ENCODE measurements at regions of chr6 and their contacts with region 1.

Region 1: DNA sequence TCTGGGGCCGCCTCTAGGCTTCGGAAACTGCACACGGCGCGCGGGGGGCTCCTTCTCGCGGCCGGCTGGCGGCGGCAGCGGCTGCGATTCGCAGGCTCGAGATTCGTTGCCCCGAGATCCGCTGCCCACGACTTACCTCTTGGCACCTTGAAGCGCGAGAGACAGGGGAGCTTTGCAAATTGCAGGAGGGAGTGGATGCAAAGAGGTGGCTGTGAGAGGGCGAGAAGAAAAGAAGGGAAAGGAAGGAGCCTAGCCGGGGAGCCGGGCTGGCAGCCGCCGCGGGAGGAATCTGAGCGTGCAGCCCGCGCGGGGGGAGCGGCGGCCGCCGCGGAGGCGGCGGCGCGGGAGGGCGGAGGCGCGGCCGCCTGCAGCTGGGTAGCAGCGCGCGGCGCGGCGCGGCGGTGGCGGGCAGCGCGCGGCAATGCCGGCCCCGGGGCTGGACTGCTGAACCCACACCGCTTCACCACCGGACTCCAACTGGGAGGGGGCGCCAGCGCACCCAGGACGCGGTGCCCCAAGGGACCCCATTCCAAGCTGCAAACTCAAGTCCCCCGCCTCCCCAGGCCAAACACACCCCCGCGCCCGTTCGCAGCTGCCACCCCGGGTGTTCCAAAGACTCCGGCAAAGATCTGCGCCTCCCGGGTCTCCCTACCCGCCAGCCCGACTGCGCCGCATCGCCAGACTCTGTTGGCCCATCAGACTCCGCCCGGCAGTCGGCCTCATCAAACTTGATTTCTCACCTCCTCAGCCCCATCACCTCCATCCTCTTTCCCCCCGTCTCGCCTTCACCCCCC is 44.2 kb upstream of the SUPT3H start:
- H3K4me3 Mint-ChIP-seq: peak overlapping the region; percentile 99
- H3K27ac Mint-ChIP-seq: peak overlapping the region; percentile 96
- H3K4me1 Mint-ChIP-seq: peaks cover 43% of the 10 kb centered on the region
- H3K27me3 Mint-ChIP-seq: peaks cover 14% of the 10 kb centered on the region

Region 2: DNA sequence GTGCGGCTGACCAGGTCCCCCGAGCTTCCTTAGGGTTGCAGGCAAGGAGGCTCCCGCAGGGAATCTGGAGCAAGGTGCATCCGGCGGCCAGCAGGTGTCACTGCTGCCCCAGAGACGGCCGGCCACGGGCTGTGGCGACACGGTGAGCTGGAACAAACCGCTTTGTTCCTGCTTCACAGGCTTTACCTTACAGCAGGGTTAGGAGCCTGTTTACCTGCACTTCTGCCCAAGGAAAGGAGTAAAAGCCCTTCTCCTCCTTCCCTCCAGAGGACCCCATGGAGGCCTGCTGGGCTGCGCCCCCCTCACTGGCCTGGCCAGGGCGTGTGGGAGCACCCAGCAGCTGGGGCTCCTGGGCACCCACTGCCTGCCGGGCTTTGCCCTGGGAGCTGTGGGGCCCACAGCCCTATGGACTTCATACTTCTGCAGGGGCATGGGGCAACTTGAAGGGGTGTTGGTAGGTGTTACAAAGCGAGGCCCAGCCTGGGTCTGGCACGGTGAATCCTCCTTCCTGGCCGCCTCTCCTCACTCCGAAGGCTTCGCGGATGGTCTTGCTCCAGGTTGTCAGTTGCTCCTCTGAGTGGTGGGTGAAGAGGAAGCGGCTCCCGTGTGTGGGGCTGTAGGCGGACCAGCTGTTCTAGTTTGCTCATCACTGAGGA is 946.0 kb before region 1 on chr6:
- intact Hi-C with region 1: loop called (anchors 5 kb)
- H3K4me3 Mint-ChIP-seq: no peak overlapping the region
- H3K27ac Mint-ChIP-seq: no peak overlapping the region
- H3K4me1 Mint-ChIP-seq: peaks cover 26% of the 10 kb centered on the region
- H3K27me3 Mint-ChIP-seq: peaks cover 18% of the 10 kb centered on the region

Region 3: DNA sequence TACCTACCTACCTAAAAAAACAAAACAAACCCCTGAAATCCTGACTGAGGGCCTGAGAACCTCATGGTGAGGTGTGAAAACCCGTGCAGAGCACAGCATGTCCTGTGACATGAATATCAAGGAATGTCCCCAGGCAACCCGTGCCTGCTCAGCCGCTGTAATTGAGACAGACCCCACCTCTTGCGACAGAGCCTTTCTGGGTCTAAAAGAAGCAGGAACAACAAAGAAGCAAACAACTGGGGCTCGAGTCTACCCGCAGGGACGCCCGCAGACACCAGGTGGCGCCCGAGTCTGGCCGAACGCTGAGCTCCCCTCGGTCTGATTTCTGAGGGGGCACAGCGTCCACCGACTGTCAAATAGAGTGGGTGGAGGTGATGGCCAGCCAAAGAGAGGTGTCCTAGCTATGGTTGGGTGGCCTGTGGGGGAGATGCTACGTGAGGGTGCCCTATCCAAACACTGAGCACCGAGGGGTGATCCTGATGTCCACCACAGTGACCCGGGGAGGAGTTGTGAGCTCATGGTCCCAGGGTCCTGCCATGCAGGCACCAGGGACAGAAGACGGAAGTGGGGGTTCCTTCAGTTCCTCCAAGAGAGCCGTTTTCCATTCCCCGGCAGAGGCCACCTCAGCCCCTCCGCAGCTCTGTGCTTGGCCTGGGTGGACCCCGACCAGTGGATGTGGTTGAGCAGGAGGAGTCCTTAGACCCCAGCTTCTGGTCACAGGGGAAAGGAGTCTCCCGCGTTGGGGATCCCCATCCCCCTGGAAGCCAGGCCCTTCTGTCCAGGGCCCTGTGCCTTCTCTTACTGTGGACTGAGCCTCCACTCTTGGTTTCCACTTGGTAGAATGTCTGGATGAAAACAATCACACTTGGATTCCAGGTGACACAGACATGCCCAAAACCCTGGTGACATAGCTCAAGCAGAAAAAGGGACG is 766.2 kb before region 1 on chr6:
- intact Hi-C with region 1: loop called (anchors 2 kb)
- H3K4me3 Mint-ChIP-seq: no peak overlapping the region
- H3K27ac Mint-ChIP-seq: peak overlapping the region; percentile 37
- H3K4me1 Mint-ChIP-seq: peaks cover 30% of the 10 kb centered on the region
- H3K27me3 Mint-ChIP-seq: peaks cover 20% of the 10 kb centered on the region

Region 4: DNA sequence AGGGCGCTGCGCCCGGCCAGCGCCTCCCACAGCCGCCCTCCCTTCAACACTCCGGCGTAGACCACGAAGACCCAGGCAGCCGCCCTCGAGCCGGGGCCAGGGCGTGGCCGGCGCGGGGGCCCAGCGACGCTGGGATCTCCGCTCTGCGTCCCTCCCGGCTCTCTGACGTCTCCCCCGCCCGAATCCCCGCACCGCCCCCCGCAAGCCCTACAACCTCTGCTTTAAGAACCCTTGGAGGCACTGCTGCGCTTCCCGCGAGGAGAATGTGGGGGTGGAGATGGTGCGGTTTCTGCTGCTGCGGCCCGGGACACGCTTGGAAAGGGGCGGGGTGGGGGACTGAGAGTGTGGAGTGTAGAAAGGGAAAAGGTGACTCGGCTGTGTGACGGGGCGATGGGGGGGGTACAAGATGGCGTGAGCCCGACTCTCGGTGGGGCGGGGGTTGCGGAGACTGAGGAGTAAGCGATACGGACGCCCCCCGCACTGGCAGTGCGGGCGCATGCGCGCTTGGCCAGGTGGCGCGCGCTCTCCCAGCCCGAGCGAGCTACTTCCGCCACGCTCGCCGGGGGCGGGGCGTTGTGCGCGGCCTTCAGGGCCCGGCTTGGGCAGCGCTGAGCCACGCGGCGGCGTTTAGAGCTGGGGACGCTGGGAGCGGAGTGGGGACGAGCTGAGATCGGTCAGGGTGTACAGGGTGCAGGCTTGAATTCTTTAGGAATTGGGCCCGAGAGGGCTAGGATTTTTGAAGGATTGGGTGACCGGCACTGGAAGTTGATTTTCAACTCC is 44.2 kb before region 1 on chr6 and contains the start of gene SUPT3H:
- intact Hi-C with region 1: loop called (anchors 5 kb)
- H3K4me3 Mint-ChIP-seq: peak within 1 kb of the TSS; percentile 95
- H3K27ac Mint-ChIP-seq: peak within 1 kb of the TSS; percentile 99
- H3K4me1 Mint-ChIP-seq: peaks cover 23% of the 10 kb centered on the region
- H3K27me3 Mint-ChIP-seq: no peaks in the 10 kb centered on the region

Region 5: DNA sequence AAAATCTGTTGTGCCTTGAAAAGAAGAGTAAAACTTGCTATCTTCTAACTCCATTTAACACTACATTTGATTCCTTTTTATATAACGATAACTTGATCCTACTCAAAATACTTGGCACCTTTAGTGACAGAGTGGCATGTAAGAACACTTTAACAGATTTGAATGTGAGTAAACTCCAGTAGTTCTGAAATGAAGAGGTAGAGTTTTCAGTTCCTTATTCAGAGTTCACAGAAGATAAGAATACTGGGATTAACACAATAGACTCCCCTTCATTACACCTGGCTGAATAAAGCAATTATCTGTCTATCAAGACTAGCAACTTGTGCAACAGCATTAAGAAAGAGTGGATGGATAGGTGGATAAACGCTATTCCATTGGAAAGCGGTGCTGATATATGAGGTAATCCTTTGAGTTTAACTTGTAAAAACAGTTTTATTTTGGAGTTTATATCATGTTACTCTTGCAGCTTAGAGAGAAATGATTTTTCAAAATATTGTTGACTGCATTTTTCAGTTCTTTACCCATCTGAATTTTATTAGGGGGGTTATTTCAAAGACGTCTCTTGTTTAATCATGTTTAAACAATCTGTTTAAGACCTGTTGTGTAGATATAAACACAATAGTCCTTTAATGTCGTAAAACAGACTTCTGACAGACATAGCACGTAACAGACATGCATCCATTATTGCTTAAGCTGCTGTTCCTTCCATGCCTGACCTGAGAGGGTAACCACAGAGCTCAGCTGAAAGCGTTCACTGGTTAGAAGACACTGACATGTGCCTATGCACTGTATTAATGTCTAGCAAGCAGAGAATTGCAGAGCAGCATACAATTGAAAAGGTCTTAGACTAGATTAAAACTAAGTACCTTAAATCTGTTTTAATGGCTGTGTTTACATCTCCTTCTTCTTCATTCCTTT is 58.2 kb after region 1 on chr6:
- intact Hi-C with region 1: loop called (anchors 5 kb)
- H3K4me3 Mint-ChIP-seq: no peak overlapping the region
- H3K27ac Mint-ChIP-seq: peak overlapping the region; percentile 39
- H3K4me1 Mint-ChIP-seq: peaks cover 29% of the 10 kb centered on the region
- H3K27me3 Mint-ChIP-seq: no peaks in the 10 kb centered on the region

Region 6: DNA sequence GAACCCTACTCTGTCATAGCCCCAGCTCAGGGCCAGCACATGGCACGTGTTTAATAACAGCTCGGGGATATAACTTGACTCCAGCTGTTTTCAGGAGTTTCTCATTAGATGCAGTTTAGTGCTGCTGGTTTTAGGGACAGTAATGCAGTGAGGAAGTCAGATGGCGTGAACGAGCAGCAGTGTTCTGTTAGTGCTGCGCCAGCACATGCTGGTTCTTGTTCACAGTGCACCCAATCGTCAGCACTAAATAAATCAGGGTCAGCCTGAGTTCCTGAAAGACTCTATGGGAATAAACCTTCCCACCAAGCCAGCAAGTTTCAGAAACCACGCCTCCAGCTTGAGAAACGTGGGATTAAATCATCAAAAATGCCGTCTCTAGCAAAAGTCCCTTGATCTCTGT is 191.8 kb after region 1 on chr6:
- intact Hi-C with region 1: no loop called
- H3K4me3 Mint-ChIP-seq: no peak overlapping the region
- H3K27ac Mint-ChIP-seq: no peak overlapping the region
- H3K4me1 Mint-ChIP-seq: no peaks in the 10 kb centered on the region
- H3K27me3 Mint-ChIP-seq: no peaks in the 10 kb centered on the region

Region 7: GRCh38 chr6:45714741-45715507 is 293.0 kb after region 1 on chr6:
- intact Hi-C with region 1: loop called (anchors 1 kb)
- H3K4me3 Mint-ChIP-seq: no peak overlapping the region
- H3K27ac Mint-ChIP-seq: peak overlapping the region; percentile 58
- H3K4me1 Mint-ChIP-seq: peaks cover 30% of the 10 kb centered on the region
- H3K27me3 Mint-ChIP-seq: no peaks in the 10 kb centered on the region

Region 8: DNA sequence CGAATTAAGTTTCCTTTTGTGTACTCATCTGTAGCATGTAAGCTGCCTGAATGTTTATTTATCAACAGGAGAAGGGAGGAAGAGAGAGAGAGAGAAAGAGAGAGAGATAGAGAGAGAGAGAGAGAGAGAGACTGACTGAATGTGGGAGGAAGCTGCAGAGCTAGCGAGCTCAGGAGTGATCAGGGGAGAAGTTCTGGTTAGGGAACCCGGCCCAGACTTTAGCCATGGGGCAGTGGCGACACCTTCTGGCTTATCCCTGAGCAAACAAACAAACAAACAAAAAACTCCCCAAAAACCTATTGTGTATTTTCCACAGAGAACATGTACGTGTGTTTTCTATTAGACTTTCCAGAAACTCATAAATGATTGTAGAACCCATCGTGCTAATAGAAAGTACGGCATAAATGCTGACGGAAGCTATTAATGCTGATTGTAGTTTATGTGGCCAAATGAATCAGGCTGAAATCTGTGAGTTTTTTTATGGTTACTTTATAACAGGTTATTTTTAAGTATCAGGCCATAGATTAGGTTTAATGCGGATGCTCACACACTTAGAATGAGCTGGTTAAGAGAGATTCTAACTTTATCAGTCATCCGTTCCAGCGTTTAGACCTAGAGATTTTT is 500.9 kb after region 1 on chr6:
- intact Hi-C with region 1: loop called (anchors 5 kb)
- H3K4me3 Mint-ChIP-seq: no peak overlapping the region
- H3K27ac Mint-ChIP-seq: no peak overlapping the region
- H3K4me1 Mint-ChIP-seq: peaks cover 6% of the 10 kb centered on the region
- H3K27me3 Mint-ChIP-seq: no peaks in the 10 kb centered on the region